CD4-positive, alpha-beta memory T cell (primary cell): ENCODE measurements at regions of chr20 and their contacts with region 1.

Region 1: GRCh38 chr20:50179507-50180016 is 11.1 kb upstream of the CEBPB start:
- DNase-seq: peak in 1 of 5 donors; percentile 4
- H3K4me3 ChIP-seq: no peak overlapping the region
- H3K4me3 Mint-ChIP-seq: no peak overlapping the region
- H3K27ac ChIP-seq: no peak overlapping the region
- H3K27ac Mint-ChIP-seq: peak overlapping the region in 1 of 7 donors; percentile 53
- H3K4me1 ChIP-seq: no peaks in the 10 kb centered on the region
- H3K4me1 Mint-ChIP-seq: peaks cover 0 to 7% (median 0%) of the 10 kb centered on the region in 4 donors
- H3K27me3 ChIP-seq: no peaks in the 10 kb centered on the region
- H3K27me3 Mint-ChIP-seq: peaks cover 2 to 4% of the 10 kb centered on the region in 2 donors

Region 2: DNA sequence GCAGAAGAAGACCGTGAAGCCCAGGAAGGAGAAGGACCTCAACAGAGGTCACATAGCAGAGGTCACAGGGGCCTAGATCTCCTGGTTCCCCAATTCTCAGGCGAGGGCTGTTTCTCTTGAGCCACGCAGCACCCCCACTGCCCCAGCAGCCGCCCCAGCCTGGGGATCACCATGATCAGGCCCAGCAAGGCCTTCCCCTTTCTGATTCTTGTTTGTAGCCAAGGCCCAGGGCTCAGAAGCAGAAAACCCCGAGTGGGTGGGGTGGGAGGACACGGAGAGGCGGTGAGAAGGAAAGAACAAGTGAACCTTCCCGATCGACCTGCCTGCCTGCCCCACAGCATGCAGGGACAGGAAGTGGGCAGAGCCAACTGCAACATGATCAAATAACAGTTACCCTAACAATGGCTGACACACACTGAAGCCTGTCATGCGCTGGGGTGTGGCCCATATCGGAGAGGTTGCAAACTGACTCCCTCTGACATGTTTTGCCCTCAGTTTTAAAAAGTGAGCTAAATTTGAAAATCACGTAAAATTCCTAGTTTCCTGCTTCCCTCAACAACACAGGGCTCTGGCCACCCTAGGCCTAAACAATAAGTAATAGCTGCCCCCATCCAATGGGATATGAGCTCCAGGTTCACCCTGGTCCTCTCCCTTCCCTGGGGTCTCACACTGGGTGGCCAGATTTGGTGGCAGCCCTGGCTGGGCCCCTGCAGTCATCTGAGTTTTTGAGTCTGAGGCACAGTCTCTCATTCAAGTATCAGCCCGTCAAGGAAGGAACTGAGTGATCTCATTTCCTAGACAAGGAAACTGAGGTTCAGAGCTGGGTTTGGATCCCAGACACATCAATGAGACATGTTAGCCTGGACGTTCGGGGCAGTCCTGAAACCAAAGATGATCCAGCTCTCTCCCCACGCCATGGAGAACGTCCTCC is 32.6 kb before region 1 on chr20:
- CTCF ChIA-PET with region 1: interaction called, 5 read pairs
- POLR2A ChIA-PET with region 1: no interaction called
- intact Hi-C with region 1: loop called (anchors 1 kb)
- DNase-seq: peak; percentile 78 to 94 (median 84)
- H3K4me3 ChIP-seq: peak overlapping the region; percentile 4 to 49
- H3K4me3 Mint-ChIP-seq: peak overlapping the region; percentile 78 to 93 (median 84)
- H3K27ac ChIP-seq: peak overlapping the region; percentile 78
- H3K27ac Mint-ChIP-seq: peak overlapping the region; percentile 97 to 99 (median 98)
- H3K4me1 ChIP-seq: peaks cover 65% of the 10 kb centered on the region
- H3K4me1 Mint-ChIP-seq: peaks cover 48 to 70% (median 60%) of the 10 kb centered on the region in 4 donors
- H3K27me3 ChIP-seq: no peaks in the 10 kb centered on the region
- H3K27me3 Mint-ChIP-seq: no peaks in the 10 kb centered on the region

Region 3: GRCh38 chr20:50237349-50238085 is 58.0 kb after region 1 on chr20:
- CTCF ChIA-PET with region 1: no interaction called
- POLR2A ChIA-PET with region 1: no interaction called
- intact Hi-C with region 1: no loop called
- DNase-seq: no peak
- H3K4me3 ChIP-seq: no peak overlapping the region
- H3K4me3 Mint-ChIP-seq: no peak overlapping the region
- H3K27ac ChIP-seq: no peak overlapping the region
- H3K27ac Mint-ChIP-seq: no peak overlapping the region
- H3K4me1 ChIP-seq: no peaks in the 10 kb centered on the region
- H3K4me1 Mint-ChIP-seq: peaks cover 0 to 3% (median 0%) of the 10 kb centered on the region in 4 donors
- H3K27me3 ChIP-seq: no peaks in the 10 kb centered on the region
- H3K27me3 Mint-ChIP-seq: peaks cover 3 to 4% of the 10 kb centered on the region in 2 donors